ENCODE measurements at regions of chr4 and their contacts with region 1.

Region 1: DNA sequence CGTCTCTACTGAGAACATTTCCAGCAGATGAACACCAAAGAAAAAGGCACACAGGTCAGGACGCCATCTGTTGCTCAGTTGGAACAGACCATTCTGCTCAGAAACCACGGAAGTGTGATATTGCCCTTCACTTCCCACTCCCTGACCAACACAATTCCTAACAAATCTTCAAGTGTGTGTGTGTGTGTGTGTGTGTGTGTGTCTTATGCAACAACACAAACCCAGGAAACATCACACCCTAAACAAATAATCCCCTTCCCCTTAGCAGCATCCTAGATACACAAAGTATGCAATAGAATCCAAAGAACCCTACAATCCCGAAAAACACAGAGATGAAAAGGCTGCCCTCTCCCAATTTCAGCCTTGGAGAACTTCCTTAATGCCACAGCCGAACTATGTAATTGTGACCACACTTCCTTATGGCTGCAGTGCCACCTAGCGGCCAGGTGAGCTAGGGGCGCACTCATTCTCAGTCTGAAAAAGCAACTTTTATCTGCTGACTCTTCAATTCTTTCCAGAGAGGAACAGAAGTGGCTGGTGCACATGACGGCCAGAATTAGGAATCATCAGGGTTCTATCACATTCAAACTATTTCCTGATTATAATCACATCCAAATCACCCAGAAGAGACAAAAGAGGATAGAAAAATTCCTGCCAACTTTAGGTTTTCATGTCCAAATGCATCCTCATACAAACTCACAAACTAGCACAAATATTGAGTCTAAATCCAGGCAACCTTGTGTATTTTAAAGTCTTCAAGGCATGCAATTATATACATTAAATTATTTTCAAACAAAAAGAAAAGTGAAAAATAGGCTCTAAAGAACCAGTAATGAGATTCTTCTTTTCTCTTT is 164.9 kb downstream of the DHX15 start:
- DNase-seq: peak; percentile 37
- H3K4me3 ChIP-seq: no peak overlapping the region
- H3K27ac ChIP-seq: no peak overlapping the region
- H3K27me3 ChIP-seq: no peaks in the 10 kb centered on the region
- CTCF ChIP-seq: peak; percentile 97

Region 2: GRCh38 chr4:23680671-23681518 is 738.5 kb before region 1 on chr4:
- CTCF ChIA-PET with region 1: interaction called, 17 read pairs
- POLR2A ChIA-PET with region 1: interaction called, 3 read pairs
- DNase-seq: no peak
- H3K4me3 ChIP-seq: no peak overlapping the region
- H3K27ac ChIP-seq: no peak overlapping the region
- H3K27me3 ChIP-seq: no peaks in the 10 kb centered on the region
- CTCF ChIP-seq: peak; percentile 21; the same call in 1 of the 2 replicates

Region 3: GRCh38 chr4:23889814-23890341 is 529.5 kb before region 1 on chr4 and contains the start of gene PPARGC1A:
- CTCF ChIA-PET with region 1: interaction called, 10 read pairs
- POLR2A ChIA-PET with region 1: no interaction called
- DNase-seq: no peak
- H3K4me3 ChIP-seq: peak within 1 kb of the TSS; percentile 61
- H3K27ac ChIP-seq: peak within 1 kb of the TSS; percentile 32
- H3K27me3 ChIP-seq: no peaks in the 10 kb centered on the region
- CTCF ChIP-seq: no peak
- polyA plus RNA-seq, gene PPARGC1A: 0.31 and 0.73 TPM in 2 replicates

Region 4: DNA sequence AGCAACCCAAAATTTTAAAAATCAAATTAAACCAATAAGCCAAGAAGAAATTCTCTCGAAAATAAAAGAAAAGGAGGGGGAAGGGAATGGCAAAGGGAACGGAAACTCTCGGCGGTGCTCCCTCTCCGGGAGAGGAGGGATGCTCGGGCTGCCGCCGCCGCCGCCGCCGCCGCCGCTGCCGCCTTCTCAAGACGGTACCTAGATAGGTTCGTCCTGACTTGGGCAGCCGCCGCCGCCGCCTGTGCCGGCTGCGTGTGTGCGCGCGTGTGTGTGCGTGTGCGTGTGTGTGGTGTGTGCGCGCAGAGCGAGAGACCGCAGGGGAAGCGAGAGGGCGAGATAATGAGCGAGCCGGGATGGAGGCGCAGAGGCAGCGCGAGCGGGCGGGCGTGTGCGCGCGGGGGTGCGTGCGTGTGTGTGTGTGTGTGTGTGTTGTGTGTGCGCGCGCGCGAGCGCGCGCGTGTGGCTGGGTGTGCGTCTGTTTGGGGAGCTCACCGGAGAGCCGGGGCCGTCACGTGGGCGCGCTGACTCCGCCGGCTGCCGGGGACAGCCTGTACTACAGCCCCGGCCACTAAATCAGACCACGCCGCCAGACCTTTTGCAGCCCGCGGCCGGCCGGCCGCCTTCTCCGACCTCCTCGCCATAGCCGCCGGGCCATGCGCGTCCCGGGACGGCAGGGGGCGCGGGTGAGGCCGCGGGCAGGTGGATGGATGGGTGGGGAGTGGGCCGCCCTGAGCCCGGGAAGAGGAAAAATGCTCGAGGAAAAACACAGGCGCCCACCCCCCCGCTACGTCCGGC is 53.3 kb after region 1 on chr4:
- CTCF ChIA-PET with region 1: interaction called, 10 read pairs
- POLR2A ChIA-PET with region 1: no interaction called
- DNase-seq: no peak
- H3K4me3 ChIP-seq: peak overlapping the region; percentile 66
- H3K27ac ChIP-seq: no peak overlapping the region
- H3K27me3 ChIP-seq: peaks cover 6% of the 10 kb centered on the region
- CTCF ChIP-seq: peak; percentile 70

Measured in AG04450 (cell line).